ENCODE measurements at regions of chr1 and their contacts with region 1.

Region 1: GRCh38 chr1:206982216-206982615 is 12.0 kb upstream of the FCAMR start:
- DNase-seq: peak; percentile 77
- CTCF ChIP-seq: peak; percentile 85

Region 2: GRCh38 chr1:206658264-206658980 is 323.8 kb before region 1 on chr1:
- CTCF ChIA-PET with region 1: interaction called, 17 read pairs
- POLR2A ChIA-PET with region 1: no interaction called
- DNase-seq: peak; percentile 79
- CTCF ChIP-seq: peak; percentile 87

Region 3: DNA sequence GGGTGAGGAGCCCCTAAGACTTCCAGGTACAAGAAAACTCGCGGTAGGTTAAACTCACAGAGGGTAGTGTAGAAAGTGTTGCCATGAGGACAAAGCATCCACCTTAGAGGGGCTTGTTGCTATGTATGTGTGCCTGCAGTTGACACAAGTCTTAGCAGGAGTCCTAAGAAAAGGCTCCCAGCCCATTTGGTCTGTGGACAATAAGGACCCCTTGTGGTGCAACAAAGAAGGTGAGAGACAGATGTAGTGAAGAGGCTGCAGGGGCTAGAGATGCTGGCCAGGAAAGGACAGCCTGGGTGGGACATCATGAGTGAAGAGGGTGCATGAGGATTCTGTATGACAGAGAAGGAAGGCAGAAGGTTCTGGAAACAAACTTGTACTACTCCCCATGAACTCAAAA is 173.6 kb before region 1 on chr1:
- CTCF ChIA-PET with region 1: interaction called, 58 read pairs
- POLR2A ChIA-PET with region 1: no interaction called
- DNase-seq: no peak
- CTCF ChIP-seq: peak; percentile 76

Region 4: DNA sequence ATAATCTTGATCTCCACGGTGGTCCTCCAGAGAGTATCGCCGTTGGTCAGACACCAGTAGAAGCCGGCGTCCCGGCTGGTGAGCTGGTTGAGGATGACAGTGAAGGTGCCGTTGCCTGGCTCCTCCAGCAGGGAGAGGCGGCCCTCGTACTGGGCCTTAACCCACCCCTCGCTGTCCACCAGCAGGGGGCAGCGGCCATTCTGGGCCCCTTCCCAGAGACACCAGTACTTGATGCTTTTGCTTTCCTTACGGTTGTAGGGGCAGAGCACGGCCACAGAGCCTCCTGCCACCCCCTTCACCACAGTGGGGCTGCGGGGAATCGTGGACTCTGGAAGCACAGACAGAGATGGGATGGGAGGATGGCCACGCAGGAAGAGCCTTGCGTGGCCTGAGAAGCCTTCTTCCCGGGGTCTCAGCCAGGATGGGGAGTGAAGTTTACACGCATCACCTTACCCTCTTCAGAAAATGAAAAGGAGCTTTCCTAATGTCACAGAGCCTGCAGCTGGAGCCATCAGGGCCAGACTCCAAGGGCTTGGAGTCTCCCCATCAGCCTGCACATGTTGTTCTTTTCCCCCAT is 46.6 kb before region 1 on chr1:
- CTCF ChIA-PET with region 1: interaction called, 357 read pairs
- POLR2A ChIA-PET with region 1: no interaction called
- DNase-seq: peak; percentile 64
- CTCF ChIP-seq: peak; percentile 49

Region 5: GRCh38 chr1:206967096-206967849 is 14.9 kb before region 1 on chr1:
- CTCF ChIA-PET with region 1: interaction called, 160 read pairs
- POLR2A ChIA-PET with region 1: no interaction called
- DNase-seq: peak; percentile 41
- CTCF ChIP-seq: no peak

Region 6: GRCh38 chr1:207115269-207115668 is 133.1 kb after region 1 on chr1:
- CTCF ChIA-PET with region 1: no interaction called
- POLR2A ChIA-PET with region 1: no interaction called
- DNase-seq: no peak
- CTCF ChIP-seq: no peak

Measured in GM10248 (cell line).